Activated CD8-positive, alpha-beta T cell treated with anti-CD3 and anti-CD28 coated beads for 36 hours (primary cell): ENCODE measurements at regions of chr10 and their contacts with region 1.

Region 1: GRCh38 chr10:100562008-100562711 is 26.4 kb downstream of the HIF1AN start:
- DNase-seq: peak; percentile 83
- ATAC-seq: peak; percentile 97
- H3K4me3 Mint-ChIP-seq: no peak overlapping the region
- H3K27ac Mint-ChIP-seq: no peak overlapping the region
- H3K4me1 Mint-ChIP-seq: peaks cover 9% of the 10 kb centered on the region
- H3K27me3 Mint-ChIP-seq: peaks cover 35% of the 10 kb centered on the region
- CTCF ChIP-seq: peak; percentile 99

Region 2: DNA sequence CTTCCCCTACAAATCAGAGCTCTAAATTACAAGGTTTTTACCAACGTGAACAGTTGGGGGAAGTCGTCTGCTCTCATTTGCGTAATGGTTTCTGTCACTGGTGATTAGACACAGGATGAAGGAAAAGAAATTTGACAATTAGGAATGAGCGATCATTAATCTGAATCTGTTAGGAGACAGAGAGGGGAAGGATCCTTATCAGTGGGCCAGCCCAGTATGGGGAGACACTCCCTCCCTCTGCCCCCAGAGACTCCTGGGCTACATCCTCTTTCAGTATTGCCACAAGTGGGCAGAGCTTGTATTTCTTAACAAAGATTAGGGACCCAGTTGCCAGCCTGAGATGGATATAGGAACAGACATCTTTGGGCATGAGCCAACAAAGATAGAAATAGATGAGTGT is 11.0 kb before region 1 on chr10:
- CTCF ChIA-PET with region 1: interaction called, 12 read pairs
- POLR2A ChIA-PET with region 1: interaction called, 10 read pairs
- intact Hi-C with region 1: no loop called
- DNase-seq: no peak
- ATAC-seq: no peak
- H3K4me3 Mint-ChIP-seq: no peak overlapping the region
- H3K27ac Mint-ChIP-seq: no peak overlapping the region
- H3K4me1 Mint-ChIP-seq: no peaks in the 10 kb centered on the region
- H3K27me3 Mint-ChIP-seq: no peaks in the 10 kb centered on the region
- CTCF ChIP-seq: no peak

Region 3: GRCh38 chr10:101080933-101081931 is 519.1 kb after region 1 on chr10:
- CTCF ChIA-PET with region 1: no interaction called
- POLR2A ChIA-PET with region 1: no interaction called
- intact Hi-C with region 1: no loop called
- DNase-seq: peak; percentile 22
- ATAC-seq: no peak
- H3K4me3 Mint-ChIP-seq: no peak overlapping the region
- H3K27ac Mint-ChIP-seq: no peak overlapping the region
- H3K4me1 Mint-ChIP-seq: no peaks in the 10 kb centered on the region
- H3K27me3 Mint-ChIP-seq: peaks cover 38% of the 10 kb centered on the region
- CTCF ChIP-seq: no peak